HepG2 (cell line): ENCODE measurements at regions of chr4 and their contacts with region 1.

Region 1: DNA sequence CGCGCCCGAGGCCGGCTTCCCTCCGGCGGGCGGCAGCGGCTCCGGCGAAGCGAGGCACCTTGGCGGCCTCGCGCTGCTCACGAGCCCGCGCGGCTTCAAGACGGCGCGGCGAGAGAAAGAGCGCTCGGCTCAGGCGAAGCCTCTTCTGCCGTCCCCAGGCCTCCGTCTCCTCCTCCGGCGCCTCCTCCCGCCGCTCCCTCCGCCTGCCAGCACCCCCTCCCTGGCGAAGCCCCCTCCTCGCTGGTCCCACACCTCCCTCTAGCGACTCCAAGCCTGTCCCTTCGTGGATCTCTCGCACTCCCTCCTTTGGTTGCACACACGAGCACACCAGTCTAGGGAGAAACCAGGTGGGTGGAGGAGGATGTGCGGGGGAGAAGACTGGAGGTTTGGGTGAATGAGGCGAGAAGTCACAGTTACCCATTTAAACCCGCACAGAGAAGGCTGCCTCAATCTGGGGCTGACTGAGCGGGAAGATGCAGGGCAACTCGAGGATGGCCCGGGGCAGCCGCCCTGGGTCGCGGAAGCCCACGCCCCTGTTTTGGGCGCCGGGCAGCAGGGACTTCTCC is at the start of gene CAMK2D:
- DNase-seq: peak; percentile 85
- ATAC-seq: peak; percentile 73
- H3K4me3 ChIP-seq: peak within 1 kb of the TSS; percentile 70 to 96 (median 94)
- H3K27ac ChIP-seq: peak within 1 kb of the TSS; percentile 95
- H3K4me1 ChIP-seq: peaks cover 57% of the 10 kb centered on the region
- H3K27me3 ChIP-seq: no peaks in the 10 kb centered on the region; a peak in 1 of 5 replicates
- CTCF ChIP-seq: peak; percentile 96
- EP300 ChIP-seq: peak in 1 of 2 experiments; percentile 24; a peak in 2 of 4 replicates
- POLR2A ChIP-seq: peak; percentile 53 to 67; a peak in 3 of 4 replicates
- RAD21 ChIP-seq: peak; percentile 65; the same call in 1 of the 2 replicates
- total RNA-seq, gene CAMK2D: 65.4 and 86.7 TPM in 2 replicates

Region 2: DNA sequence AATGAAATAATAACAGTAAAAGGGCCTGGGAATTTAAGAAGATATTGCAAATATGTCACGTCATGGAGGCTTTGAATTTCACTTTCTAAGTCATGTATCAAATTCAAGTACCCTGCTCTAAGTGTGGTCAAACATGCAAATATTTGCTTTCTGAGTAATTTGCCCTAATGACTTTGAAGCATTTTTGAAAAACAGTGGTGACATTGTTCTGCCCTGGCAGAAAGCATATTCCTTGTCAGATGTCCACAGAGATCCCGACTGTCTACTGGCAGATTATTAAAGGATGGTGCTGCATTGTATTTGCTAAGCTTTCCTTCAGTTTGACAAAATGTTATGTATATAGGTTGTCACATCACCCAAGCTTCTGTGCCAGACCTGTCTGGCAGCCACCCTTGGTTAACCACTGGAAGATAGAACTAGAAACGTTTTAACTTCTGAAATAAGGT is 619.8 kb before region 1 on chr4:
- CTCF ChIA-PET with region 1: no interaction called
- POLR2A ChIA-PET with region 1: no interaction called
- in situ Hi-C with region 1: no loop called
- intact Hi-C with region 1: loop called (anchors 10 kb)
- DNase-seq: peak; percentile 98
- ATAC-seq: peak; percentile 87
- H3K4me3 ChIP-seq: peak overlapping the region in 2 of 3 experiments; percentile 1 to 15; a peak in 1 of 6 replicates
- H3K27ac ChIP-seq: peak overlapping the region; percentile 49
- H3K4me1 ChIP-seq: peaks cover 52% of the 10 kb centered on the region
- H3K27me3 ChIP-seq: no peaks in the 10 kb centered on the region
- CTCF ChIP-seq: no peak
- EP300 ChIP-seq: peak; percentile 64 to 91; a peak in 3 of 4 replicates
- POLR2A ChIP-seq: peak in 1 of 2 experiments; percentile 59; a peak in 2 of 4 replicates
- RAD21 ChIP-seq: no peak

Region 3: DNA sequence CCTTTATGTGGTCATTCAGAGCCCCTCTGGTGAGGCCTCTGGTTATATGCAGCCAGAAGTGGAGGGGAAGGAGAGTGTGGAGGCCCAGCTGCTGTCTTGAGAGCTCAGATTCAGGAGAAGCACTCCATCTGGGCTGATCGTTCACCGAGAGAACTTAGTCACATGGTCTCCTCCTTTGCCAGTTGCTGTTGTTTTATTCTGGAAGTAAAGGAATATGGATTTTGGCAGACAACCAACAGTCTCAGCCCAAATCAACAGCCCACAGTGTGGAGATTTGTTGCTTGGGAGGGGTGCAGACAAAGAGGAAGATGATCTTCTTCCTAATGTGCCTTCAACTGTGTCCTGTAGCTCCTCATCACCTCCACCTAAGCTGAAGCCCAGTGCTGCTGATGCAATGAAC is 356.9 kb before region 1 on chr4:
- CTCF ChIA-PET with region 1: no interaction called
- POLR2A ChIA-PET with region 1: interaction called, 3 read pairs
- in situ Hi-C with region 1: no loop called
- intact Hi-C with region 1: loop called (anchors 2 kb)
- DNase-seq: no peak
- ATAC-seq: peak; percentile 47
- H3K4me3 ChIP-seq: peak overlapping the region in 2 of 3 experiments; percentile 14 to 33; a peak in 2 of 6 replicates
- H3K27ac ChIP-seq: peak overlapping the region; percentile 64
- H3K4me1 ChIP-seq: peaks cover 50% of the 10 kb centered on the region
- H3K27me3 ChIP-seq: no peaks in the 10 kb centered on the region
- CTCF ChIP-seq: no peak
- EP300 ChIP-seq: no peak
- POLR2A ChIP-seq: no peak
- RAD21 ChIP-seq: no peak

Region 4: GRCh38 chr4:113547487-113548042 is 214.1 kb before region 1 on chr4:
- CTCF ChIA-PET with region 1: interaction called, 8 read pairs
- POLR2A ChIA-PET with region 1: interaction called, 5 read pairs
- in situ Hi-C with region 1: loop called (anchors 5 kb)
- intact Hi-C with region 1: loop called (anchors 1 kb)
- DNase-seq: peak; percentile 97
- ATAC-seq: peak; percentile 100
- H3K4me3 ChIP-seq: no peak overlapping the region
- H3K27ac ChIP-seq: peak overlapping the region; percentile 32
- H3K4me1 ChIP-seq: peaks cover 22% of the 10 kb centered on the region
- H3K27me3 ChIP-seq: no peaks in the 10 kb centered on the region
- CTCF ChIP-seq: peak; percentile 98
- EP300 ChIP-seq: peak in 1 of 2 experiments; percentile 62; a peak in 2 of 4 replicates
- POLR2A ChIP-seq: no peak
- RAD21 ChIP-seq: peak; percentile 87

Region 5: GRCh38 chr4:113645771-113646441 is 115.8 kb before region 1 on chr4:
- CTCF ChIA-PET with region 1: no interaction called
- POLR2A ChIA-PET with region 1: interaction called, 5 read pairs
- in situ Hi-C with region 1: no loop called
- intact Hi-C with region 1: loop called (anchors 1 kb)
- DNase-seq: peak; percentile 81
- ATAC-seq: peak; percentile 90
- H3K4me3 ChIP-seq: no peak overlapping the region; a peak in 1 of 6 replicates
- H3K27ac ChIP-seq: peak overlapping the region; percentile 69
- H3K4me1 ChIP-seq: peaks cover 63% of the 10 kb centered on the region
- H3K27me3 ChIP-seq: no peaks in the 10 kb centered on the region
- CTCF ChIP-seq: no peak
- EP300 ChIP-seq: peak in 1 of 2 experiments; percentile 67; a peak in 2 of 4 replicates
- POLR2A ChIP-seq: no peak
- RAD21 ChIP-seq: no peak

Region 6: GRCh38 chr4:113684534-113685091 is 77.1 kb before region 1 on chr4:
- CTCF ChIA-PET with region 1: no interaction called
- POLR2A ChIA-PET with region 1: interaction called, 6 read pairs
- in situ Hi-C with region 1: no loop called
- intact Hi-C with region 1: loop called (anchors 2 kb)
- DNase-seq: peak; percentile 85
- ATAC-seq: peak; percentile 100
- H3K4me3 ChIP-seq: no peak overlapping the region
- H3K27ac ChIP-seq: no peak overlapping the region
- H3K4me1 ChIP-seq: peaks cover 42% of the 10 kb centered on the region
- H3K27me3 ChIP-seq: no peaks in the 10 kb centered on the region
- CTCF ChIP-seq: peak; percentile 55
- EP300 ChIP-seq: no peak
- POLR2A ChIP-seq: no peak
- RAD21 ChIP-seq: peak; percentile 52